Activated B cell treated with CpG ODN at 0.5 μM for 24 hours (primary cell): ENCODE measurements at regions of chr14 and their contacts with region 1.

Region 1: GRCh38 chr14:24431569-24432258 is 2.0 kb downstream of the KHNYN start:
- DNase-seq: peak; percentile 73
- ATAC-seq: peak; percentile 41
- H3K4me3 Mint-ChIP-seq: peak overlapping the region; percentile 93
- H3K27ac Mint-ChIP-seq: peak overlapping the region; percentile 97
- H3K4me1 Mint-ChIP-seq: peaks cover 53% of the 10 kb centered on the region
- H3K27me3 Mint-ChIP-seq: no peaks in the 10 kb centered on the region
- CTCF ChIP-seq: peak; percentile 49

Region 2: GRCh38 chr14:24093901-24094761 is 337.6 kb before region 1 on chr14 and contains the start of gene PCK2:
- CTCF ChIA-PET with region 1: interaction called, 4 read pairs
- POLR2A ChIA-PET with region 1: interaction called, 8 read pairs
- intact Hi-C with region 1: loop called (anchors 1 kb)
- DNase-seq: peak; percentile 76
- ATAC-seq: peak; percentile 69
- H3K4me3 Mint-ChIP-seq: peak within 1 kb of the TSS; percentile 99
- H3K27ac Mint-ChIP-seq: peak within 1 kb of the TSS; percentile 99
- H3K4me1 Mint-ChIP-seq: peaks cover 31% of the 10 kb centered on the region
- H3K27me3 Mint-ChIP-seq: no peaks in the 10 kb centered on the region
- CTCF ChIP-seq: no peak
- total RNA-seq, gene PCK2: 82.1 and 102 TPM in 2 replicates

Region 3: DNA sequence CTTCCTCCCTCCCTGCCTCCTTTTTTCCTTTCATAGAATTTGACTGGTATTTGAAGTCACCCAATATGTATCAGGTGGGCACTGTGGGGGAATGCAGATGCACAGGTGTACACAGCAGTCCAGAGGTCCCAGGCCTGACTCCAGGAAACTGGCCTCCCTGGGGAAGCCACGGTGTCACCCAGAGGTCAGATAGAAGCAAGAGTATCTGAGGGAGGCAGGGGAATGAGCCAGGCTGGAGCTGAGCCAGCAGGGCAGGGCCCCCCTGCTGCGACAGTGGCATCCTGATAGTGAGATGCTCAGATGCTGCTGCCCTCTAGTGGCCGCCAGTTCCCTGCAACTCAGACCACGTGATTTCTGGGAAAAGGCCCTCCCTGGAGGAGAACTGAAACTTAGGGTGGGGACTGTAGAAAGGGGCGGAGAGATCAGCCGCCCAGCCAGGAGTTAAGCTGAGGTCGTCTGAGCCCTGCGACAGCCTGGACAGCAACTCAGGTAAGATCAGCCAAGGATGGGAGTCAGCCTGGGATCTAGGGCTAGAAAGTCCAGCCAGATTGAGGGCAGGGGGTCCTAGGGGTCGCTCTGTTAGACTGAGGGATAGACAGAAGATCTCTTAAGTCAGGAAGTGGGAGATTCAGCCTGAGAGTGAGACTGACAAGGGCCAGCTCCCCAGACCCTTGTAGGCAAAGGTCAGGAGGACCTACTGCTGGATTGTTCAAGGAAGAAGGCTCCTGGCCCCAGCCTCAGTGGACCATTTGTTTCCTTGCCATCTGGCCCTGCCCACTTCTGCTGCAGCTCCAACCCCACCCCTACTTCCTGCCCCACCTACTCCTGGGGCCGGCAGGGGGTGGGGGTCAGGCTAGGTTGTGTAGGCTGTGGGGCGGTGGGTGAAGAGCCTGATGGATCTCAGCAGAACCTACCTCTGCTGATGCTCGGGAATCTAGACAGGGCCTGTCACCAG is 270.6 kb before region 1 on chr14 and contains the start of gene IRF9:
- CTCF ChIA-PET with region 1: interaction called, 3 read pairs
- POLR2A ChIA-PET with region 1: interaction called, 19 read pairs
- intact Hi-C with region 1: loop called (anchors 1 kb)
- DNase-seq: peak; percentile 90
- ATAC-seq: peak; percentile 92
- H3K4me3 Mint-ChIP-seq: peak within 1 kb of the TSS; percentile 98
- H3K27ac Mint-ChIP-seq: peak within 1 kb of the TSS; percentile 95
- H3K4me1 Mint-ChIP-seq: peaks cover 45% of the 10 kb centered on the region
- H3K27me3 Mint-ChIP-seq: no peaks in the 10 kb centered on the region
- CTCF ChIP-seq: no peak
- total RNA-seq, gene IRF9: 221 and 229 TPM in 2 replicates

Region 4: GRCh38 chr14:24241829-24242443 is 189.8 kb before region 1 on chr14:
- CTCF ChIA-PET with region 1: interaction called, 26 read pairs
- POLR2A ChIA-PET with region 1: interaction called, 55 read pairs
- intact Hi-C with region 1: loop called (anchors 1 kb)
- DNase-seq: peak; percentile 91
- ATAC-seq: peak; percentile 81
- H3K4me3 Mint-ChIP-seq: peak overlapping the region; percentile 99
- H3K27ac Mint-ChIP-seq: peak overlapping the region; percentile 100
- H3K4me1 Mint-ChIP-seq: peaks cover 68% of the 10 kb centered on the region
- H3K27me3 Mint-ChIP-seq: no peaks in the 10 kb centered on the region
- CTCF ChIP-seq: no peak

Region 5: GRCh38 chr14:24332268-24332993 is 99.3 kb before region 1 on chr14:
- CTCF ChIA-PET with region 1: interaction called, 353 read pairs
- POLR2A ChIA-PET with region 1: interaction called, 216 read pairs
- intact Hi-C with region 1: loop called (anchors 1 kb)
- DNase-seq: peak; percentile 63
- ATAC-seq: peak; percentile 95
- H3K4me3 Mint-ChIP-seq: peak overlapping the region; percentile 83
- H3K27ac Mint-ChIP-seq: peak overlapping the region; percentile 42
- H3K4me1 Mint-ChIP-seq: peaks cover 39% of the 10 kb centered on the region
- H3K27me3 Mint-ChIP-seq: peaks cover 14% of the 10 kb centered on the region
- CTCF ChIP-seq: no peak

Region 6: DNA sequence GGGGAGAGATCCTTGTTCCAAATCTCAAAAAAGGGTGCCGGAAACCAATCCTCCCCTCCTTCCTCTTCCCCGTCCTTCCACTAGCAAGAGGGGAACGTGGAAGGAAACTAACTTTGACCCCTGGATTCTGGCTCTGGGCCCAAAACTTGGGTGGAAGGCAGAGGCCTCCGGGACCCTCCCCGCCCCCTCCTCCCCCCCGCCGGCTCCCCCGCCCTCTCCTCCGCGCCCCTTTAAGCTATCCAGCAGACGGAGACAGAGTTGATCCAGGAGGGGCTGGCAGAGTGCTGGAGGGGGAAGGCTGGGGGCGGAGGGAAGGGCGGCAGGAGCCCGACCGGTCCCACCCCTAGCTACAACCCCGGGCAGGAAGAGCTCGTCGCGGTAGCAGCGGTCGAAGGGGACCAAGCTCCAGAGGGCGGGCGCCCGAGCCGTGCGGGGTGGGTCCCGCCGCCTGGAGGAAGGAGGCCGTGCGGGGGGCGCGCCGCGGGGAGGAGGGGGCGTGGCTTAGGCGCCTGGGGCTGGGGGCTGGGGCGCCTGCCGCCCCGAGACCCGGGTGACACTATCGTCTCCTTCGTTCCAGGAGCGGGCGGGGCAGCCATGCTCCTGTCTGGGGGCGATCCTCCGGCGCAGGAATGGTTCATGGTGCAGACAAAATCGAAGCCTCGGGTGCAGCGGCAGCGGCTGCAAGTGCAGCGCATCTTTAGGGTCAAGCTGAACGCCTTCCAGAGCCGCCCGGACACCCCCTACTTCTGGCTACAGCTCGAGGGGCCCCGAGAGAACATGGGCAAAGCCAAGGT is 32.9 kb before region 1 on chr14 and contains the start of gene NYNRIN:
- CTCF ChIA-PET with region 1: interaction called, 3 read pairs
- POLR2A ChIA-PET with region 1: interaction called, 10 read pairs
- intact Hi-C with region 1: loop called (anchors 5 kb)
- DNase-seq: peak; percentile 30
- ATAC-seq: peak; percentile 89
- H3K4me3 Mint-ChIP-seq: peak within 1 kb of the TSS; percentile 71
- H3K27ac Mint-ChIP-seq: no peak within 1 kb of the TSS
- H3K4me1 Mint-ChIP-seq: peaks cover 11% of the 10 kb centered on the region
- H3K27me3 Mint-ChIP-seq: peaks cover 30% of the 10 kb centered on the region
- CTCF ChIP-seq: no peak
- total RNA-seq, gene NYNRIN: 0.02 and 0.04 TPM in 2 replicates

Region 7: GRCh38 chr14:24542346-24542936 is 110.7 kb after region 1 on chr14:
- CTCF ChIA-PET with region 1: no interaction called
- POLR2A ChIA-PET with region 1: no interaction called
- intact Hi-C with region 1: no loop called
- DNase-seq: no peak
- ATAC-seq: no peak
- H3K4me3 Mint-ChIP-seq: no peak overlapping the region
- H3K27ac Mint-ChIP-seq: no peak overlapping the region
- H3K4me1 Mint-ChIP-seq: no peaks in the 10 kb centered on the region
- H3K27me3 Mint-ChIP-seq: peaks cover 20% of the 10 kb centered on the region
- CTCF ChIP-seq: no peak